CD4-positive, alpha-beta T cell (primary cell): ENCODE measurements at regions of chr18 and their contacts with region 1.

Region 1: GRCh38 chr18:29191263-29191662 is 1014.3 kb upstream of the CDH2 start:
- DNase-seq: no peak
- ATAC-seq: no peak
- H3K4me3 ChIP-seq: no peak overlapping the region
- H3K4me3 Mint-ChIP-seq: no peak overlapping the region
- H3K27ac ChIP-seq: no peak overlapping the region
- H3K27ac Mint-ChIP-seq: no peak overlapping the region
- H3K4me1 ChIP-seq: no peaks in the 10 kb centered on the region
- H3K4me1 Mint-ChIP-seq: no peaks in the 10 kb centered on the region
- H3K27me3 ChIP-seq: no peaks in the 10 kb centered on the region
- H3K27me3 Mint-ChIP-seq: no peaks in the 10 kb centered on the region
- CTCF ChIP-seq: no peak

Region 2: GRCh38 chr18:28995319-28995718 is 195.9 kb before region 1 on chr18:
- CTCF ChIA-PET with region 1: no interaction called
- POLR2A ChIA-PET with region 1: no interaction called
- intact Hi-C with region 1: no loop called
- DNase-seq: no peak
- ATAC-seq: no peak
- H3K4me3 ChIP-seq: no peak overlapping the region
- H3K4me3 Mint-ChIP-seq: no peak overlapping the region
- H3K27ac ChIP-seq: no peak overlapping the region
- H3K27ac Mint-ChIP-seq: no peak overlapping the region
- H3K4me1 ChIP-seq: no peaks in the 10 kb centered on the region
- H3K4me1 Mint-ChIP-seq: no peaks in the 10 kb centered on the region
- H3K27me3 ChIP-seq: no peaks in the 10 kb centered on the region
- H3K27me3 Mint-ChIP-seq: no peaks in the 10 kb centered on the region
- CTCF ChIP-seq: no peak

Region 3: GRCh38 chr18:29259838-29260237 is 68.6 kb after region 1 on chr18:
- CTCF ChIA-PET with region 1: no interaction called
- POLR2A ChIA-PET with region 1: no interaction called
- intact Hi-C with region 1: loop called in 1 of 2 experiments (anchors 10 kb)
- DNase-seq: no peak
- ATAC-seq: no peak
- H3K4me3 ChIP-seq: no peak overlapping the region
- H3K4me3 Mint-ChIP-seq: no peak overlapping the region
- H3K27ac ChIP-seq: no peak overlapping the region
- H3K27ac Mint-ChIP-seq: no peak overlapping the region
- H3K4me1 ChIP-seq: no peaks in the 10 kb centered on the region
- H3K4me1 Mint-ChIP-seq: no peaks in the 10 kb centered on the region
- H3K27me3 ChIP-seq: no peaks in the 10 kb centered on the region
- H3K27me3 Mint-ChIP-seq: no peaks in the 10 kb centered on the region
- CTCF ChIP-seq: no peak